ENCODE measurements at regions of chr2 and their contacts with region 1.

Region 1: GRCh38 chr2:201231781-201232466 is 28.4 kb upstream of the CASP8 start:
- DNase-seq: peak; percentile 82
- ATAC-seq: peak; percentile 52
- H3K4me3 Mint-ChIP-seq: peak overlapping the region; percentile 95
- H3K27ac Mint-ChIP-seq: peak overlapping the region; percentile 97
- H3K4me1 Mint-ChIP-seq: peaks cover 47% of the 10 kb centered on the region
- H3K27me3 Mint-ChIP-seq: no peaks in the 10 kb centered on the region

Region 2: GRCh38 chr2:200275295-200276013 is 956.5 kb before region 1 on chr2:
- POLR2A ChIA-PET with region 1: no interaction called
- DNase-seq: no peak
- ATAC-seq: no peak
- H3K4me3 Mint-ChIP-seq: no peak overlapping the region
- H3K27ac Mint-ChIP-seq: no peak overlapping the region
- H3K4me1 Mint-ChIP-seq: no peaks in the 10 kb centered on the region
- H3K27me3 Mint-ChIP-seq: peaks cover 24% of the 10 kb centered on the region

Region 3: GRCh38 chr2:200864176-200864976 is 367.5 kb before region 1 on chr2 and contains the start of gene CLK1:
- POLR2A ChIA-PET with region 1: interaction called, 12 read pairs
- DNase-seq: peak; percentile 95
- ATAC-seq: peak; percentile 79
- H3K4me3 Mint-ChIP-seq: peak within 1 kb of the TSS; percentile 96
- H3K27ac Mint-ChIP-seq: peak within 1 kb of the TSS; percentile 98
- H3K4me1 Mint-ChIP-seq: peaks cover 27% of the 10 kb centered on the region
- H3K27me3 Mint-ChIP-seq: no peaks in the 10 kb centered on the region
- total RNA-seq, gene CLK1: 204 to 228 TPM

Region 4: GRCh38 chr2:200963124-200963917 is 268.6 kb before region 1 on chr2 and contains the start of gene ORC2:
- POLR2A ChIA-PET with region 1: interaction called, 13 read pairs
- DNase-seq: peak; percentile 96
- ATAC-seq: peak; percentile 93
- H3K4me3 Mint-ChIP-seq: peak within 1 kb of the TSS; percentile 96
- H3K27ac Mint-ChIP-seq: peak within 1 kb of the TSS; percentile 97
- H3K4me1 Mint-ChIP-seq: peaks cover 43% of the 10 kb centered on the region
- H3K27me3 Mint-ChIP-seq: no peaks in the 10 kb centered on the region
- total RNA-seq, gene ORC2: 52.0 to 55.0 TPM

Region 5: GRCh38 chr2:201118121-201118960 is 113.6 kb before region 1 on chr2:
- POLR2A ChIA-PET with region 1: interaction called, 28 read pairs
- DNase-seq: peak; percentile 82
- ATAC-seq: peak; percentile 28
- H3K4me3 Mint-ChIP-seq: peak overlapping the region; percentile 89
- H3K27ac Mint-ChIP-seq: peak overlapping the region; percentile 99
- H3K4me1 Mint-ChIP-seq: peaks cover 45% of the 10 kb centered on the region
- H3K27me3 Mint-ChIP-seq: no peaks in the 10 kb centered on the region

Region 6: DNA sequence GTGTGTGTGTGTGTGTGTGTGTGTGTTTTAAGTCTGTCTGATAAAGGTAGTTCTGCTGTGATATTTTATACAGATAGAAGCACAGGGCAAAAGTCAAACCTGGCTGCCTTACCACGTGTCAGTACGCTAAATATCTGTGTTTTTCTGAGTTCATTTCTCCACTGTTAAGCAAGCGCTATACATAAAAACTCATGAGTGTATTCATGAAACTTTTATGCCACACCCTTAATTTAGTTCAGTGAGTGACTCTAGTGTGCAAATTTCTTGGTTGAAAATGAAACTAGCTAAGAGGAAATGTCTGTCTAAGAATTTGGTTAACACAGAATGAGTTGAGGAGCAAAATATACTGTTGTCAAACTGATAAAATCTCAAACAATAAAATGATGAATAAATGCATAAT is 37.8 kb before region 1 on chr2:
- POLR2A ChIA-PET with region 1: interaction called, 13 read pairs
- DNase-seq: no peak
- ATAC-seq: peak; percentile 66
- H3K4me3 Mint-ChIP-seq: peak overlapping the region; percentile 79
- H3K27ac Mint-ChIP-seq: peak overlapping the region; percentile 89
- H3K4me1 Mint-ChIP-seq: peaks cover 52% of the 10 kb centered on the region
- H3K27me3 Mint-ChIP-seq: no peaks in the 10 kb centered on the region

Region 7: DNA sequence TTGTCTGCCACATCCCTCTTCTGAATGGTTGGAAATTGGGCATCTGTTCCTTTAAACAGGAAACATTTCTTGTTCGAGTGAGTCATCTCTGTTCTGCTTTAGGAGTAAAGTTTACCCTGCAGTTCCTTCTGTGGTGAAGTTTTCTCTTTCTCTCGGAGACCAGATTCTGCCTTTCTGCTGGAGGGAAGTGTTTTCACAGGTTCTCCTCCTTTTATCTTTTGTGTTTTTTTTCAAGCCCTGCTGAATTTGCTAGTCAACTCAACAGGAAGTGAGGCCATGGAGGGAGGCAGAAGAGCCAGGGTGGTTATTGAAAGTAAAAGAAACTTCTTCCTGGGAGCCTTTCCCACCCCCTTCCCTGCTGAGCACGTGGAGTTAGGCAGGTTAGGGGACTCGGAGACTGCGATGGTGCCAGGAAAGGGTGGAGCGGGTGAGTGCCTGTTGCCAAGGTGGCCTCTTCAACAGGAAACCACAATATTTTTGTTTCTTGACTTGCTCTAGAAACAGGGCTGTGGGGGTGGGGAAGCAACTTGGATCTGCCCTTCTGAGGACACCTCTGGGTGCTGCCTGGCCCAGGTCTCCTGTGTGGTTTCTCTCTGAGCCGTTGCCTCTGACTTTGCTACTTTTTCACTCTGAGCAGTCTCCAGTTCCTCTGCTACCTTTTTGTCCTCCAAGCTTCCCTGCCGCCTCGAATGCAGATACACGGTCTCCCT is 26.2 kb after region 1 on chr2:
- POLR2A ChIA-PET with region 1: interaction called, 147 read pairs
- DNase-seq: peak; percentile 80
- ATAC-seq: peak; percentile 70
- H3K4me3 Mint-ChIP-seq: peak overlapping the region; percentile 83
- H3K27ac Mint-ChIP-seq: peak overlapping the region; percentile 98
- H3K4me1 Mint-ChIP-seq: peaks cover 60% of the 10 kb centered on the region
- H3K27me3 Mint-ChIP-seq: no peaks in the 10 kb centered on the region

Region 8: GRCh38 chr2:201285499-201285898 is 53.6 kb after region 1 on chr2:
- POLR2A ChIA-PET with region 1: no interaction called
- DNase-seq: no peak
- ATAC-seq: no peak
- H3K4me3 Mint-ChIP-seq: no peak overlapping the region
- H3K27ac Mint-ChIP-seq: peak overlapping the region; percentile 27
- H3K4me1 Mint-ChIP-seq: peaks cover 9% of the 10 kb centered on the region
- H3K27me3 Mint-ChIP-seq: no peaks in the 10 kb centered on the region